Adrenal gland (tissue), 19 donors: ENCODE measurements at regions of chr17 and their contacts with region 1.

Region 1: GRCh38 chr17:65198653-65199382 is 61.6 kb downstream of the RGS9 start:
- DNase-seq: peak in 4 of 7 donors; percentile 18 to 55 (median 34)
- H3K4me3 ChIP-seq: no peak overlapping the region
- H3K27ac ChIP-seq: no peak overlapping the region
- H3K4me1 ChIP-seq: no peaks in the 10 kb centered on the region
- H3K27me3 ChIP-seq: no peaks in the 10 kb centered on the region
- CTCF ChIP-seq: peak; percentile 78 to 92 (median 89)
- POLR2A ChIP-seq: no peak

Region 2: DNA sequence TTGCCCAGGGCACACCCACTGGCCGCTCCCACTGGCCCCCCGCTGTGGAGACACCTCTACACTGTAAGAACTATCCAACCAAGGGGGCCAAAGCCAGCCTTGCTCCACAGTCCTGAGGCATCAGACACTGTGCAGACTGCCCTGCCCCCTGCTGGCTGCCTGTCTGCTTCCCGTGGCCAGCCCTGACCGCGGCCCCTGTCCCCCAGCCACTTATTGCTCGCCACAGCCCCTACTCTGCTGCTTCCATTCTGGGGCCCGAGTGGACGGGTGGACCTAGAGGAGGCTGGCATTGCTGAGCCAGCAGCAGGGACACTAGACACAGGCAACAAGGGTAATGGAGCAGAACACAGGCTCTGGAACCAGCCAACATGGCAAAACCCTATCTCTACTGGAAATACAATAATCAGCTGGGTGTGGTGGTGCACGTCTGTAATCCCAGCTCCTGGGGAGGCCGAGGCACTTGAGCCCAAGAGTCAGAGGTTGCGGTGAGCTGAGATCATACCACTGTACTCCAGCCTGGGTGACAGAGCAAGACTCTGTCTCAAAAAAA is 259.8 kb before region 1 on chr17:
- intact Hi-C with region 1: loop called in 1 of 2 experiments (anchors 10 kb)
- DNase-seq: peak; percentile 51 to 79 (median 69)
- H3K4me3 ChIP-seq: no peak overlapping the region
- H3K27ac ChIP-seq: peak overlapping the region in 3 of 5 donors; percentile 25 to 42 (median 27)
- H3K4me1 ChIP-seq: peaks cover 8 to 14% of the 10 kb centered on the region in 2 donors
- H3K27me3 ChIP-seq: no peaks in the 10 kb centered on the region
- CTCF ChIP-seq: peak; percentile 43 to 71 (median 64)
- POLR2A ChIP-seq: no peak

Region 3: DNA sequence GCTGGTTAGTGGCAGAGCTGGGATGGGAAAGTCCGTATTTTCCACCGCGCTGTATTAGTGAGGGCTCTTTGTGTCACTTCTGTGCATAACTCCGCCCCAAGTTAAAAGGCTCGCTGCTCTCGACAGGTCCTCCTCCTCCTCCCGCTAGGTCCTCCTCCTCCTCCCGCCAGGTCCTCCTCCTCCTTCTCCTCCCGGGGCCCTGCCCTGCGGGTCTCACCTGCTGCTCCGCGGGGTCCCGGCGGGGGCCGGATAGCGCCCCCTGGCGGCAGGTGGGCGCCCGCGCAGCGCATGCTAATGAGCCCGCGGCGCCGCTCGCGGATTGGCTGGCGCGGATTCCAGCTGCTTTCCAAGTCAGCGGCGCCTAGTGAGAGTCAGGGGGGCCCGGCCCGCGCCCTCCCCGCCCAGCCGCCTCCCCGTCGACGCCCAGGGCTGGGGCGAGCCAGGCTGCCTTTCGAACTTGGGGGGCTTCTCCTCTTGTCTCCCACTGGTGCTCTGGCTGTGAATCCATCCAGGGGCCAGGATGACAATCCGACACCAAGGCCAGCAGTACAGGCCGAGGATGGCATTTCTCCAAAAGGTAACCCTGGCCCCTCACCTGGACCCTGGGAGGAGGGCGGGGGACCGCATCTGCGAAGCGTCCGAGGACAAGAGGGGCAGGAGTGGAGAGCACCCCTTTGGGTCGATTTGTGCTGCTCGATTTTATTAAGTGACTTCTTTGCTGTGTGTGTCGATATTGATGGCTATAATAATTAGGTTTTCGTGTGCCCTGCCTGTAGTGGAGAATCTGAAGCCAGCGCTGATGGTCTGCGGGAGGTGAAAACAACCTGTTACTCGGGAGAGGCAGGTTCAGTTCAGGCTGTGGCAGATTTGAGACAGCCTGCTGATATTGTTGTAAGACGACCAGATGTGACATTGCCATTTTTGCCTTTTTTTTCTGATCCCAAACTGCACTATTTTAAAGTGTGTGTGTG is 61.5 kb before region 1 on chr17 and contains the start of gene RGS9:
- intact Hi-C with region 1: loop called in 1 of 2 experiments (anchors 5 kb)
- DNase-seq: peak; percentile 79 to 90 (median 88)
- H3K4me3 ChIP-seq: peak within 1 kb of the TSS in 3 of 4 donors; percentile 16 to 50 (median 35)
- H3K27ac ChIP-seq: no peak within 1 kb of the TSS
- H3K4me1 ChIP-seq: peaks cover 4 to 11% of the 10 kb centered on the region in 2 donors
- H3K27me3 ChIP-seq: no peaks in the 10 kb centered on the region
- CTCF ChIP-seq: peak; percentile 89 to 99 (median 97)
- POLR2A ChIP-seq: no peak
- total RNA-seq, gene RGS9: 6.6 to 32.3 (median 23.5) TPM

Region 4: GRCh38 chr17:65163990-65164495 is 34.8 kb before region 1 on chr17:
- intact Hi-C with region 1: no loop called
- DNase-seq: peak in 3 of 7 donors; percentile 27 to 39 (median 33)
- H3K4me3 ChIP-seq: no peak overlapping the region
- H3K27ac ChIP-seq: no peak overlapping the region
- H3K4me1 ChIP-seq: no peaks in the 10 kb centered on the region
- H3K27me3 ChIP-seq: no peaks in the 10 kb centered on the region
- CTCF ChIP-seq: no peak
- POLR2A ChIP-seq: no peak

Region 5: GRCh38 chr17:65417406-65418221 is 218.8 kb after region 1 on chr17:
- intact Hi-C with region 1: no loop called
- DNase-seq: no peak
- H3K4me3 ChIP-seq: no peak overlapping the region
- H3K27ac ChIP-seq: no peak overlapping the region
- H3K4me1 ChIP-seq: no peaks in the 10 kb centered on the region
- H3K27me3 ChIP-seq: no peaks in the 10 kb centered on the region
- CTCF ChIP-seq: no peak
- POLR2A ChIP-seq: no peak